AG04449 (cell line): ENCODE measurements at regions of chr17 and their contacts with region 1.

Region 1: GRCh38 chr17:2094891-2095535 is 40.1 kb downstream of the HIC1 start:
- DNase-seq: no peak
- H3K4me3 ChIP-seq: no peak overlapping the region
- CTCF ChIP-seq: peak; percentile 89

Region 2: DNA sequence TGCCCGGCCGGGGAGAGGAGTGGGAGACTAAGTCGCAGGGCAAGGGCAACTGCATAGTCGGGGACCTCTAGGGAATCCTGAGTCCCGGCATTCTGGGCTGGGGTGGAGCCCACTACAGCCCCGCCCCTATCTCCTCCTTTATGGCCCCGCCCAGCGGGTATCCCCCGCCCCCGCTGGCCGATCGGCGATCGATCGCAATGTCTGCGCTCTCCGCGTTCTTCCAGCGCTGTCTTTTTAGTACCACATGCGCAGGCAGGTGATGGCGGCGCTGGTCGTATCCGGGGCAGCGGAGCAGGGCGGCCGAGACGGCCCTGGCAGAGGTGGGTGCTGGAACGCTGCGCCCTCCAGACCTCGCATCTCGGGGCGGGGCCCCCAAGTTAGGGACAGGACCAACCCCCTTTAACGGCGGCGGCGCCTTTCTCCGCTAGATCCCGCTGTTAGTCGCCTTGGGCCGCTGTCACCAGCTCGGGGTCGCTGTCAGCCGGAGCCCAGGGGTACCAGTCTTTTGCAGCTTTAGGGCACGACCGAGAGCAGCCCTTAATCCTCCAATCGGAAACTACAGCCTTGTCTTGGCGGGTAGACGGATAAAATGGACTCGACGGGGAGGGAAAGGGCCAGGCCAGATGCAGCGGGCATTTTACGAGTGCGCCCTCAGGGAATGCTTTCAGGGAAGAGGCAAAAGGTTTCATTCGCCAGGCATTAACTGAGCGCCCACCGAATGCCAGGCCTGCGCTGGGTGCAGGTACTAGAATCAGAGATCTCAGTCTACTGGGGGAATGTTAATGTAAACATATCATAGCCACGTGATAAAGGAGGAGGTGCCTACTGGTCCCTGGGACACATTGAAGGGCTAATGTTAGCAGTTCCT is 64.9 kb before region 1 on chr17 and contains the start of gene DPH1:
- CTCF ChIA-PET with region 1: no interaction called
- POLR2A ChIA-PET with region 1: no interaction called
- DNase-seq: no peak
- H3K4me3 ChIP-seq: peak within 1 kb of the TSS; percentile 100
- CTCF ChIP-seq: no peak

Region 3: GRCh38 chr17:2227025-2227699 is 132.1 kb after region 1 on chr17:
- CTCF ChIA-PET with region 1: interaction called, 15 read pairs
- POLR2A ChIA-PET with region 1: no interaction called
- DNase-seq: no peak
- H3K4me3 ChIP-seq: no peak overlapping the region
- CTCF ChIP-seq: no peak

Region 4: GRCh38 chr17:2282297-2282873 is 187.4 kb after region 1 on chr17:
- CTCF ChIA-PET with region 1: interaction called, 16 read pairs
- POLR2A ChIA-PET with region 1: no interaction called
- DNase-seq: peak; percentile 55
- H3K4me3 ChIP-seq: no peak overlapping the region
- CTCF ChIP-seq: peak; percentile 33